Heart right ventricle (tissue), 16 donors: ENCODE measurements at regions of chr21 and their contacts with region 1.

Region 1: GRCh38 chr21:38925923-38926322 is 120.2 kb downstream of the ETS2 start:
- DNase-seq: peak; percentile 60 to 71
- ATAC-seq: peak; percentile 86 to 95 (median 89)
- H3K4me3 ChIP-seq: peak overlapping the region in 8 of 10 donors; percentile 4 to 44 (median 32)
- H3K27ac ChIP-seq: peak overlapping the region; percentile 44 to 89 (median 72)
- H3K4me1 ChIP-seq: peaks cover 6 to 33% (median 17%) of the 10 kb centered on the region in 9 donors
- H3K27me3 ChIP-seq: no peaks in the 10 kb centered on the region
- CTCF ChIP-seq: no peak

Region 2: GRCh38 chr21:38494703-38495102 is 431.2 kb before region 1 on chr21:
- intact Hi-C with region 1: no loop called
- DNase-seq: no peak
- ATAC-seq: peak in 4 of 8 donors; percentile 10 to 32 (median 18)
- H3K4me3 ChIP-seq: peak overlapping the region in 9 of 10 donors; percentile 18 to 64 (median 54)
- H3K27ac ChIP-seq: peak overlapping the region in 9 of 10 donors; percentile 13 to 95 (median 85)
- H3K4me1 ChIP-seq: peaks cover 0 to 58% (median 35%) of the 10 kb centered on the region in 9 donors
- H3K27me3 ChIP-seq: no peaks in the 10 kb centered on the region
- CTCF ChIP-seq: peak in 2 of 9 donors; percentile 5 to 16

Region 3: DNA sequence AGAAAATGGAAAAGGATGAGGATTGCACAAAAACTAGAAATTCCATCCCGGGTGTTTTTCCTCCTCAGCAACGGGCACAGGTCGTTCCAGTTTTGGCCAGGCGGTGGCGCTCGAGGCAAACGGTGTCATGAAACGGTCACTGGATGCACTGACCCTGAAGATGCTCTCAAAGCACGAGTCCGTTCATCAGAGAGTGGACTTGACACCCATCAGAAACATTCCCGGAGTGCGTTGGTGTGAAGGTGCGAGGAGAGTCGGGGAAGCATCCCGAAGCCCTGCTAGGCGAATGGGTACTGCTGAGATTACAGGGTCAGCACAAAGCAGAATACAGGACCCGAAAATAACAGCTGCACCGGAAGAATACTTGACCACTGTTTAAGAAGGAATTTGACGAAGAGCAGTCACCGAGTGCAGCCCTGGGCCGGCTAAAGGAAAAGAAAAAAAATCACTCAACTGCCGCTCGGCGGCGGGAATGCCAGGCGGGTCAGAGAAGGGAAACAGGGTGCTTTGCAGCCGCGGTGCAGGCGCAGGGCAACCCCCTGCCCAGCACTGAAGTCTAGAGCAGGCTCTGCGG is 191.9 kb before region 1 on chr21:
- intact Hi-C with region 1: no loop called
- DNase-seq: peak; percentile 90 to 93
- ATAC-seq: peak; percentile 88 to 96 (median 94)
- H3K4me3 ChIP-seq: peak overlapping the region in 8 of 10 donors; percentile 18 to 44 (median 40)
- H3K27ac ChIP-seq: peak overlapping the region in 9 of 10 donors; percentile 47 to 90 (median 75)
- H3K4me1 ChIP-seq: peaks cover 2 to 25% (median 10%) of the 10 kb centered on the region in 9 donors
- H3K27me3 ChIP-seq: peaks cover 0 to 6% (median 0%) of the 10 kb centered on the region in 7 donors
- CTCF ChIP-seq: peak; percentile 87 to 95 (median 94)

Region 4: GRCh38 chr21:38973552-38973951 is 47.6 kb after region 1 on chr21:
- intact Hi-C with region 1: loop called in 1 of 10 experiments (anchors 5 kb)
- DNase-seq: no peak
- ATAC-seq: no peak
- H3K4me3 ChIP-seq: no peak overlapping the region
- H3K27ac ChIP-seq: no peak overlapping the region
- H3K4me1 ChIP-seq: peaks cover 0 to 6% (median 0%) of the 10 kb centered on the region in 9 donors
- H3K27me3 ChIP-seq: no peaks in the 10 kb centered on the region
- CTCF ChIP-seq: no peak

Region 5: GRCh38 chr21:39422527-39423241 is 496.8 kb after region 1 on chr21:
- intact Hi-C with region 1: no loop called
- DNase-seq: no peak
- ATAC-seq: no peak
- H3K4me3 ChIP-seq: no peak overlapping the region
- H3K27ac ChIP-seq: no peak overlapping the region
- H3K4me1 ChIP-seq: no peaks in the 10 kb centered on the region
- H3K27me3 ChIP-seq: no peaks in the 10 kb centered on the region
- CTCF ChIP-seq: no peak